Lower leg skin (tissue), 4 donors: ENCODE measurements at regions of chr2 and their contacts with region 1.

Region 1: DNA sequence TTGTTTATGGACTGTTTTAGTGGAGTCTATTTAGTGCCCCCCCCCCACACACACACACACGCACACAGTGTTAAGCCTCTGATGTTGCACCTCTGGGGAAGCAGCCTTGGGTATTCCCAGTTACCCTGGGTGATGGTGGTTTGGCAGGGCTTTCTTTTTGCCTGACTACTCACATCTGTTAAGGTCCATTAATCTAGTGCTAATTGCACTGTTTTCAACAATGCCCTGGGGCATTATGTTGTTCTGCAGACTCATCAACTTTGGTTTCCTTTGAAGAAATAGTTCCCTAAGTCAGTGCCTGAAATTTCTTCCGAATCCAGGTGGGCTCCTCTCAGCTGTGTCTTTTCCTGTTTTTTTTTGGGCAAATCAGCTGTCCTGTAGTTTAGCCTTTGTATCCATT is 34.7 kb downstream of the SPOPL start:
- DNase-seq: no peak
- H3K4me3 ChIP-seq: no peak overlapping the region
- CTCF ChIP-seq: no peak
- POLR2A ChIP-seq: no peak

Region 2: GRCh38 chr2:137797641-137798040 is 738.7 kb before region 1 on chr2:
- intact Hi-C with region 1: loop called (anchors 5 kb)
- DNase-seq: no peak
- H3K4me3 ChIP-seq: no peak overlapping the region
- CTCF ChIP-seq: no peak
- POLR2A ChIP-seq: no peak

Region 3: GRCh38 chr2:138244501-138244925 is 291.8 kb before region 1 on chr2:
- intact Hi-C with region 1: no loop called
- DNase-seq: peak in 1 of 2 donors; percentile 20
- H3K4me3 ChIP-seq: no peak overlapping the region
- CTCF ChIP-seq: no peak
- POLR2A ChIP-seq: no peak